GM12878 (cell line): ENCODE measurements at regions of chr14 and their contacts with region 1.

Region 1: DNA sequence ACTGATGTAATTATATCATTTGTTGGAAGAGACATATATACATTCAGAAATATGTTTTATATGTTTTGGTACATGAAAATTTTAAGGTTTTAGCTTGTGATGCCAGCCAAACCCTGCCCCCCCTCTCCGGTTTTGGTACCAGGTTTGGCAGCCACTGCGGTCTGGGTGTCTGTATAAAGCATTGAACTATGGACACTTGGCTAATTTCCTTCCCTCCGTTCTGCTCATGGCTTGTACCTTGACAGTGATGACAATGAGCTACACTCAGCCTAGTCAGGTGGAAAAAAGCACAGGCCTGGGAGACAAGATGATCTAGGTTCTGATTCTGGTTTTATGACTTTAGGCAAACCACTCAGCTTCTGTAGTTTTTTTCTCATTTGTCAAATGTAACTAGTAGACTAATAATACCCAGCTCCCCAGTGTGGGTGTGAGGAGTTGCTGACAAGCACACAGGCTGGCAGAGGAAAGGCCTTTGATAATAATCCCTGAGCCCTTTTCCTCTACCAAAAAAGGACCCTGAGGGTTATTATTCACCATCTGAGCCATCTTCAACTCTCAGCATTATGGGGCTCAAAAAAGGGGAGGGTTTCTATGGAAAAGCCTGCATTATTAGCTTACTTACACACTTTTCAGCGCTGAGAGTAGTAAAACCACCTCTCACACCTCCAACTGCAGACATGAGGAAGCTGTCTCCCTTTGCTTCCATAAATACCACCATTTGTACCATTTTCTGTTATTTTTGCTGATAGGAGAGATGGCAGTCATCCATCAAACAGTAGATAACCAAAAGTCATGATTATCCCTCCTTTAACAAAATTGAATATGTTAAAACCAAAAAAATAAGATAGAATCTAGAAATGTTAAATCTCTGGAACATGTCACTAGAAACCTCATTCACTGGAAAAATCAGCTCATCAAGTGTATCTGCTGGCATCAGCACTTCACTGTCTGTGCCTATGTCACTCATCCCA is 76.3 kb upstream of the PSMC1 start:
- DNase-seq: no peak
- ATAC-seq: no peak
- H3K4me3 ChIP-seq: no peak overlapping the region
- H3K27ac ChIP-seq: no peak overlapping the region
- H3K4me1 ChIP-seq: no peaks in the 10 kb centered on the region
- H3K27me3 ChIP-seq: no peaks in the 10 kb centered on the region
- CTCF ChIP-seq: no peak
- EP300 ChIP-seq: no peak
- POLR2A ChIP-seq: no peak
- RAD21 ChIP-seq: no peak

Region 2: DNA sequence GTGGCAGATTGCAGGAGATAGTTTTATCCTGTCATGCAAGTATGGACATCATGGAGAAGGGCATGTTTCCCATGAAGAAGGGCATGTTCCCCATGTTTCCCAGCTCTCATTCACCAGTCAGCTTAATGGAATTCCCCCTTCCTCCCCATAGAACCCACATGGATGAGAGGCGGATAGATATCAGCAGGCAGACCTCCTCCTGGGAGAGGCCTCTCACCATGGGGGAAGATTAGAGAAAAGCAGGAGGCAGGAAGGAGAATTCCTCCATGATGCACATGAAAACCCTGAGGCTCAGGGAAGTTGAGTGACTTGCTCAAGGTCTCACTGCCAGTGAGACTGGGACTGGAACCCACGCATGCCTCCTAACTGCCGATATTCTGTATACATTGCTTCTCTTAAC is 670.2 kb before region 1 on chr14:
- CTCF ChIA-PET with region 1: no interaction called
- POLR2A ChIA-PET with region 1: no interaction called
- RAD21 ChIA-PET with region 1: no interaction called
- SMC1A ChIA-PET with region 1: no interaction called
- in situ Hi-C with region 1: no loop called
- intact Hi-C with region 1: loop called (anchors 10 kb)
- DNase-seq: no peak
- ATAC-seq: no peak
- H3K4me3 ChIP-seq: no peak overlapping the region
- H3K27ac ChIP-seq: peak overlapping the region; percentile 69
- H3K4me1 ChIP-seq: peaks cover 35% of the 10 kb centered on the region
- H3K27me3 ChIP-seq: no peaks in the 10 kb centered on the region
- CTCF ChIP-seq: no peak
- EP300 ChIP-seq: no peak
- POLR2A ChIP-seq: no peak
- RAD21 ChIP-seq: no peak

Region 3: DNA sequence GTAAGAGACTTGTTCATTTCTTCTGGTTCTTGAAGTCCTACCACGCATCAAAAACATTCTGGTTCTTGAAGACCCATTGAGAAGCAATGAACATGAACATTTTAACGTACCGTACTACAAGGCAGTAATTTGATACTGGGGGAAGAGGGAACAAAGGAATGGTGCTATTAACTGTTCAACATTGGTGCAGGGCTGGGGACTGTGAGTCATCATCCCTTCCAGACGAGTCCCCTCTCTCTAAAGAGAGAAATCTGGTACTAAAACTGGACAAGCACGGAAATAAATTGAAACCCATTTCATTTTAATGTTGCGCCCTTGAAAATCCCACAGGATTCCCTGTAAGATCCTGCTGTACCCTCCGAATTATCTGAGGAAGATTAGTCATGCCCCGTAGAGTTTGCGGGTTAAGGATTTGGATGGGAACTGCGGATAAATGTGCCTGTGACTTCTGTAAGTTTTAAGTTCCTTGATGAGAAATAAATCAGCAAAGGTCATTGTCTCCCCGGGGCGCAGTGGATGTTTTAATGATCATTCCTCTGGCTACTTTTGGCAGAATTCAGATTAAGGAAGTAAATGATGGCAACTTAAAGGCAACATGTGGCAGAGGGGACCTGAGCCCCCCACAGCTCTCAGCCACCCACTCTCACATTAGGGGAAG is 39.7 kb before region 1 on chr14:
- CTCF ChIA-PET with region 1: no interaction called
- POLR2A ChIA-PET with region 1: no interaction called
- RAD21 ChIA-PET with region 1: no interaction called
- SMC1A ChIA-PET with region 1: no interaction called
- in situ Hi-C with region 1: no loop called
- intact Hi-C with region 1: no loop called
- DNase-seq: no peak
- ATAC-seq: no peak
- H3K4me3 ChIP-seq: no peak overlapping the region
- H3K27ac ChIP-seq: no peak overlapping the region
- H3K4me1 ChIP-seq: no peaks in the 10 kb centered on the region
- H3K27me3 ChIP-seq: no peaks in the 10 kb centered on the region
- CTCF ChIP-seq: no peak
- EP300 ChIP-seq: no peak
- POLR2A ChIP-seq: no peak
- RAD21 ChIP-seq: no peak

Region 4: DNA sequence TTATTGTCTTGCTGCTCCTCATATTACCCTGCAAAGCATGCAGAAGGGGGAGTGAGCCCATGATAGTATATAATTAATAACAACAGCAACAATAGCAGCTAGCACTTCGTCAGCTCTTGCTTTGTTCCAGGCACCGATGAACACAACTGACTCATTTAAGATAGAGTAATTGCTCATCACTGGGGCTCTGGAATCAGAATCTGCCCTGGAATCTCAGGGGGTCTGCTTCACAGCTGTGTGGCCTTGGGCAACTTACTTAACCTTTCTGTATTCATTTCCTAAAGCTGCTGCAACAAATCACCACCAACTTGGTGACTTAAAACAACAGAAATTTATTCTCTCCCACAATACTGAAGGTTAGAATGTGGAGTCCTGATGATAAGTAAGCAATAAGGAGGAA is 21.2 kb after region 1 on chr14:
- CTCF ChIA-PET with region 1: no interaction called
- POLR2A ChIA-PET with region 1: no interaction called
- RAD21 ChIA-PET with region 1: no interaction called
- SMC1A ChIA-PET with region 1: no interaction called
- in situ Hi-C with region 1: no loop called
- intact Hi-C with region 1: no loop called
- DNase-seq: no peak
- ATAC-seq: no peak
- H3K4me3 ChIP-seq: no peak overlapping the region
- H3K27ac ChIP-seq: no peak overlapping the region
- H3K4me1 ChIP-seq: no peaks in the 10 kb centered on the region
- H3K27me3 ChIP-seq: no peaks in the 10 kb centered on the region
- CTCF ChIP-seq: no peak
- EP300 ChIP-seq: no peak
- POLR2A ChIP-seq: no peak
- RAD21 ChIP-seq: no peak

Region 5: GRCh38 chr14:90213099-90213748 is 33.1 kb after region 1 on chr14:
- CTCF ChIA-PET with region 1: no interaction called
- POLR2A ChIA-PET with region 1: no interaction called
- RAD21 ChIA-PET with region 1: no interaction called
- SMC1A ChIA-PET with region 1: no interaction called
- in situ Hi-C with region 1: no loop called
- intact Hi-C with region 1: no loop called
- DNase-seq: no peak
- ATAC-seq: no peak
- H3K4me3 ChIP-seq: no peak overlapping the region
- H3K27ac ChIP-seq: no peak overlapping the region
- H3K4me1 ChIP-seq: no peaks in the 10 kb centered on the region
- H3K27me3 ChIP-seq: no peaks in the 10 kb centered on the region
- CTCF ChIP-seq: no peak
- EP300 ChIP-seq: no peak
- POLR2A ChIP-seq: no peak
- RAD21 ChIP-seq: no peak

Region 6: DNA sequence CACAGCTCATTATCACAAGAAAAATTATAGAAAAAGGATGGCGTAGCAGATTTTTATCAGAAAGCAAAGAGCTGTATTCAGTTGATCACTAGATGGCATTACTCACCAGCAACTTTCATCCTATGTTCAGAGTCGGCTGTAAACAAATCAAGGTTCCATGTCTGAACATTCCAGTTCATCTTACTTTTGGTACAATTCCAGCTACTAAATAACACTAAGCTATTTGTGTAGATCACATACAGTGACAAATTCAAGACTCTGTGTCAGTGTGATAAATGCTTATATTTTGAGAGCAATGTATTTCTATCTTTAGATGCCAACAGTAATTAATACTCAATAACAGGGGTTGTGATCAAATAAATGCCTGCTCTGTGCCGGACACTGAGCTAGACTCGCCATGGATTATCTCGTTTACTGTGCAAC is 121.6 kb after region 1 on chr14:
- CTCF ChIA-PET with region 1: no interaction called
- POLR2A ChIA-PET with region 1: no interaction called
- RAD21 ChIA-PET with region 1: no interaction called
- SMC1A ChIA-PET with region 1: no interaction called
- in situ Hi-C with region 1: no loop called
- intact Hi-C with region 1: no loop called
- DNase-seq: no peak
- ATAC-seq: peak; percentile 55; the same call in 2 of the 3 replicates
- H3K4me3 ChIP-seq: no peak overlapping the region
- H3K27ac ChIP-seq: no peak overlapping the region
- H3K4me1 ChIP-seq: no peaks in the 10 kb centered on the region
- H3K27me3 ChIP-seq: no peaks in the 10 kb centered on the region
- CTCF ChIP-seq: peak; percentile 12 to 47 (median 26); a peak in 3 of 6 replicates
- EP300 ChIP-seq: no peak
- POLR2A ChIP-seq: no peak
- RAD21 ChIP-seq: peak; percentile 65